ENCODE measurements at regions of chr17 and their contacts with region 1.

Region 1: GRCh38 chr17:55513885-55514591 is 2.8 kb upstream of the SMIM36 start:
- DNase-seq: peak; percentile 73
- H3K4me3 ChIP-seq: no peak overlapping the region
- H3K27ac ChIP-seq: no peak overlapping the region
- H3K4me1 ChIP-seq: no peaks in the 10 kb centered on the region
- H3K27me3 ChIP-seq: peaks cover 1 to 19% of the 10 kb centered on the region in 2 experiments
- CTCF ChIP-seq: peak; percentile 77 to 82
- POLR2A ChIP-seq: no peak

Region 2: DNA sequence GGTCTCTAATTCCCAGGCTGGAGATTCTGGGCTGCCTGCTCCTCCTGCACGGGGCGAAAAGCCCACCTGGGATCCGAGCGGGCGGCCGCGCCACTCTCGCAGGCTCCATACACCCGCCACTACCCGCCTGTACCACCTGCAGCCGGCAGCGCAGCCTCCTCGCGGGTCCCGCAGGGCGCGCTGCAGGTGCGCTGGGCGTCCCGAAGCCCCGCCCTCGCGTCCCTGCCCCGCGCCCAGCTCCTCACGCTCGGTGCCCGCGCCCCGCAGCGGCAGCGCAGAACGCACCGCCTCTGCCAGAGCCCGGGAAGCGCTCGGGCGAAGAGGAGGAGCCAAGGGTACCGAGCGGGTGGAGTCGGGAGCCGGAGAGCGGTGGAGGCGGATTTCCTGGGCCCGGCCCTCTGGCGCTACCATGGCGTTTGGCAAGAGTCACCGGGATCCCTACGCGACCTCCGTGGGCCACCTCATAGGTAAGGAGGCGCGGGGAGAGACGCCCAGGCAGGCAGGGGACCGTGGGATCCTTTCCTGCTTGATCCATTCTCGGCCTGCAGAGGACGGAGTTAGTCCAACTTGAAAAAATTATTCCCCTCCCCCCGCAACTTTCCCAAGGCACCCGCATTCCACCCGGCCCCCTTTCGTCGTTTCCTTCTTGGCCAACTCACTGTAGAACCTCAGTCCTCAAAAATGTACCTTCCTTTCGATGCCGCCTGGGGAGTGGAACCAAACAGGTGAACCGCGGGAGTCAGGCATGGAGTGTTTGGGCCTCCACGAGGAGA is 613.4 kb before region 1 on chr17 and contains the start of gene TOM1L1:
- CTCF ChIA-PET with region 1: no interaction called
- POLR2A ChIA-PET with region 1: no interaction called
- dilution Hi-C with region 1: no loop called
- intact Hi-C with region 1: no loop called
- DNase-seq: no peak
- H3K4me3 ChIP-seq: peak within 1 kb of the TSS in 2 of 3 experiments; percentile 26 to 28
- H3K27ac ChIP-seq: no peak within 1 kb of the TSS
- H3K4me1 ChIP-seq: peaks cover 3% of the 10 kb centered on the region
- H3K27me3 ChIP-seq: peaks cover 7 to 13% of the 10 kb centered on the region in 2 experiments
- CTCF ChIP-seq: no peak
- POLR2A ChIP-seq: no peak
- total RNA-seq, gene TOM1L1: 0.60 and 1.1 TPM in 2 replicates

Region 3: GRCh38 chr17:55295411-55296170 is 218.4 kb before region 1 on chr17:
- CTCF ChIA-PET with region 1: interaction called, 3 read pairs
- POLR2A ChIA-PET with region 1: no interaction called
- dilution Hi-C with region 1: no loop called
- intact Hi-C with region 1: loop called (anchors 2 kb)
- DNase-seq: peak; percentile 65
- H3K4me3 ChIP-seq: no peak overlapping the region
- H3K27ac ChIP-seq: no peak overlapping the region
- H3K4me1 ChIP-seq: no peaks in the 10 kb centered on the region
- H3K27me3 ChIP-seq: no peaks in the 10 kb centered on the region
- CTCF ChIP-seq: peak; percentile 68 to 82
- POLR2A ChIP-seq: no peak

Region 4: GRCh38 chr17:55356434-55357328 is 157.4 kb before region 1 on chr17:
- CTCF ChIA-PET with region 1: interaction called, 82 read pairs
- POLR2A ChIA-PET with region 1: no interaction called
- dilution Hi-C with region 1: loop called (anchors 10 kb)
- intact Hi-C with region 1: loop called (anchors 1 kb)
- DNase-seq: peak; percentile 65
- H3K4me3 ChIP-seq: no peak overlapping the region
- H3K27ac ChIP-seq: no peak overlapping the region
- H3K4me1 ChIP-seq: no peaks in the 10 kb centered on the region
- H3K27me3 ChIP-seq: peaks cover 0 to 14% of the 10 kb centered on the region in 2 experiments
- CTCF ChIP-seq: peak; percentile 69 to 70
- POLR2A ChIP-seq: no peak

Region 5: GRCh38 chr17:55421179-55421934 is 92.7 kb before region 1 on chr17 and contains the start of gene MMD:
- CTCF ChIA-PET with region 1: interaction called, 6 read pairs
- POLR2A ChIA-PET with region 1: no interaction called
- dilution Hi-C with region 1: no loop called
- intact Hi-C with region 1: loop called (anchors 10 kb)
- DNase-seq: no peak
- H3K4me3 ChIP-seq: peak within 1 kb of the TSS; percentile 89 to 97 (median 92)
- H3K27ac ChIP-seq: peak within 1 kb of the TSS; percentile 61
- H3K4me1 ChIP-seq: peaks cover 13% of the 10 kb centered on the region
- H3K27me3 ChIP-seq: peaks cover 8 to 28% of the 10 kb centered on the region in 2 experiments
- CTCF ChIP-seq: no peak
- POLR2A ChIP-seq: no peak
- total RNA-seq, gene MMD: 9.3 TPM in 2 replicates

Region 6: GRCh38 chr17:56185905-56186783 is 672.1 kb after region 1 on chr17:
- CTCF ChIA-PET with region 1: no interaction called
- POLR2A ChIA-PET with region 1: no interaction called
- dilution Hi-C with region 1: no loop called
- intact Hi-C with region 1: no loop called
- DNase-seq: peak; percentile 84
- H3K4me3 ChIP-seq: no peak overlapping the region
- H3K27ac ChIP-seq: peak overlapping the region; percentile 73
- H3K4me1 ChIP-seq: peaks cover 12% of the 10 kb centered on the region
- H3K27me3 ChIP-seq: no peaks in the 10 kb centered on the region
- CTCF ChIP-seq: no peak
- POLR2A ChIP-seq: no peak